Activated CD8-positive, alpha-beta T cell treated with anti-CD3 and anti-CD28 coated beads for 36 hours (primary cell): ENCODE measurements at regions of chrX and their contacts with region 1.

Region 1: GRCh38 chrX:132226169-132226568 is 6.9 kb upstream of the RAP2C start:
- DNase-seq: no peak
- ATAC-seq: no peak
- H3K4me3 Mint-ChIP-seq: no peak overlapping the region
- H3K27ac Mint-ChIP-seq: no peak overlapping the region
- H3K4me1 Mint-ChIP-seq: peaks cover 9% of the 10 kb centered on the region
- H3K27me3 Mint-ChIP-seq: no peaks in the 10 kb centered on the region
- CTCF ChIP-seq: peak; percentile 40

Region 2: GRCh38 chrX:132631579-132632232 is 405.5 kb after region 1 on chrX:
- CTCF ChIA-PET with region 1: interaction called, 13 read pairs
- POLR2A ChIA-PET with region 1: no interaction called
- intact Hi-C with region 1: no loop called
- DNase-seq: no peak
- ATAC-seq: peak; percentile 66
- H3K4me3 Mint-ChIP-seq: no peak overlapping the region
- H3K27ac Mint-ChIP-seq: no peak overlapping the region
- H3K4me1 Mint-ChIP-seq: no peaks in the 10 kb centered on the region
- H3K27me3 Mint-ChIP-seq: no peaks in the 10 kb centered on the region
- CTCF ChIP-seq: peak; percentile 35